ENCODE measurements at regions of chr15 and their contacts with region 1.

Region 1: DNA sequence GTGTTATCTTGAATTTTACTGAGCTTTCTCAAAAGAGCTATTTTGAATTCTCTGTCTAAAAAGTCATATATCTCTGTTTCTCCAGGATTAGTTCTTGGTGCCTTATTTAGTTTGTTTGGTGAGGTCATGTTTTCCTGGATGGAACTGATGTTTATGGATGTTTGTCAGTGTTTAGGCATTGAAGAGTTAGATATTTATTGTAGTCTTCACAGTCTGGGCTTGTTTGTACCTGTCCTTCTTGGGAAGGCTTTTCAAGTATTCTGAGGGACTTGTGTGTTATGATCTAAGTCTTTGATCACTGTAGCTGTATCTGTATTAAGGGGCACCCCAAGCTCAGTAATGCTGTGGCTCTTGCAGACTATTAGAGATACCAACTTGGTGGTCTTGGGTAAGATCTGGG is 10.6 kb upstream of the RAD51 start:
- DNase-seq: no peak
- ATAC-seq: no peak
- H3K4me3 ChIP-seq: no peak overlapping the region
- H3K27ac ChIP-seq: no peak overlapping the region
- H3K4me1 ChIP-seq: peaks cover 0 to 2% of the 10 kb centered on the region in 2 donors
- H3K27me3 ChIP-seq: no peaks in the 10 kb centered on the region
- CTCF ChIP-seq: no peak

Region 2: DNA sequence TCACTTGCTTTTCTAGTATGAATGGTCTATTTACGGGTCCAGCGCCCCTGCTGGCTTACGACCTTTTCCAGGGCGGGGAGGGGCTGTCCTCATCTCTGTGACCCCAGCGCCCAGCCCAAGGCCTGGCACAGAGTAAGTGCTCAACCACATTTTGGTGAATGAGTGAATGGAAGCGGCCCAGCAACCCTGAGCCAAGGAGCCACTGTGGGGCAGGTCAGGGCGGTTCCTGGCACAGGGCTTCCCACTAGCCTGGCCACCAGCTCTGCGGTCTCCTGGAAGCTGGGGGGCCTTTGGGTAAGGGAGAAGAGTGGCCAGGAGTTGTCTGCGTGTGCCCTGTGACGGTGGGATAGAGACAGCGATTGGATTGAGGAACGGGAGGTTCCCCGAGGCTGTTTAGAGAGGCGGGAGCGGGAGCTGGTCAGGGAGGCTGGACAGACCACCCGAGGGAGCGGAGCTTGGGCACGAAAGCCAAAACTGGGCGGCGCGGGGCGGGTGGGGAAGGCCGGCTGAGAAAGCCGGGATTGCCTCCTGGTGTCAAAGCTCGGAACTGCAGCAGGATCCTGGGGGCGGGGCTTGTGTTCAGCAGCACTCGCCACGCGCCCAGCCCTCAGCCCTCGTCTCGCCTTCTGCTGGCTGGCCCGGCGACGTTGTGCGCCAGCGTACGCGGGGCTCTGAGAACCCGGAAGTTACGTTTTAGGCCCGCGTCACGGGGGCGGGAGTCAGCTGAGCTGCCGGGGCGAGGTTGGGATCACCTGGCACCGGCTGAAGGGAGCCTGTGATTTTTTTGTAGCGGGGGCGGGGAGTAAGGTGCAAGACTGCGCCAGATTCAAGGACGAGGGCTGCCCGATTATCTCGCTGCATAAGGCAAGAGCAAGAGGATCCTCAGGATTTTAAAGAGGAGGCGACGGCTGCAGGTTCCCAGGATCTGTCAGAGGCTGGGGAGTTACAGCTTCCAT is 209.6 kb after region 1 on chr15 and contains the start of gene VPS18:
- intact Hi-C with region 1: loop called in 1 of 2 experiments (anchors 5 kb)
- DNase-seq: peak; percentile 97 to 100 (median 99)
- ATAC-seq: peak; percentile 97
- H3K4me3 ChIP-seq: peak within 1 kb of the TSS; percentile 93 to 94
- H3K27ac ChIP-seq: peak within 1 kb of the TSS; percentile 83 to 84
- H3K4me1 ChIP-seq: peaks cover 5 to 43% of the 10 kb centered on the region in 2 donors
- H3K27me3 ChIP-seq: no peaks in the 10 kb centered on the region
- CTCF ChIP-seq: peak; percentile 97 to 100
- polyA plus RNA-seq, gene VPS18: 9.2 to 13.7 (median 12.9) TPM

Measured in left lung (tissue), 14 donors.